ENCODE measurements at regions of chr1 and their contacts with region 1.

Region 1: GRCh38 chr1:202531472-202531811 is 178.8 kb downstream of the SYT2 start:
- DNase-seq: no peak
- H3K4me3 Mint-ChIP-seq: peak overlapping the region; percentile 8
- H3K27ac Mint-ChIP-seq: peak overlapping the region; percentile 74
- H3K4me1 Mint-ChIP-seq: peaks cover 25% of the 10 kb centered on the region
- H3K27me3 Mint-ChIP-seq: no peaks in the 10 kb centered on the region
- CTCF ChIP-seq: no peak

Region 2: GRCh38 chr1:202516434-202516877 is 15.0 kb before region 1 on chr1:
- CTCF ChIA-PET with region 1: interaction called, 3 read pairs
- intact Hi-C with region 1: loop called (anchors 1 kb)
- DNase-seq: no peak
- H3K4me3 Mint-ChIP-seq: no peak overlapping the region
- H3K27ac Mint-ChIP-seq: no peak overlapping the region
- H3K4me1 Mint-ChIP-seq: no peaks in the 10 kb centered on the region
- H3K27me3 Mint-ChIP-seq: no peaks in the 10 kb centered on the region
- CTCF ChIP-seq: no peak

Measured in Calu3 (cell line).